Thyroid gland (tissue), 4 donors: ENCODE measurements at regions of chr7 and their contacts with region 1.

Region 1: GRCh38 chr7:8190119-8190895 is 71.7 kb downstream of the ICA1 start:
- DNase-seq: peak; percentile 65 to 70
- H3K4me3 ChIP-seq: no peak overlapping the region
- H3K27ac ChIP-seq: no peak overlapping the region
- H3K4me1 ChIP-seq: peaks cover 8 to 18% of the 10 kb centered on the region in 2 donors
- H3K27me3 ChIP-seq: no peaks in the 10 kb centered on the region
- CTCF ChIP-seq: peak in 5 of 6 experiments; percentile 47 to 79 (median 74)
- POLR2A ChIP-seq: no peak

Region 2: GRCh38 chr7:7653593-7654187 is 536.6 kb before region 1 on chr7:
- intact Hi-C with region 1: loop called (anchors 10 kb)
- DNase-seq: no peak
- H3K4me3 ChIP-seq: no peak overlapping the region
- H3K27ac ChIP-seq: no peak overlapping the region
- H3K4me1 ChIP-seq: no peaks in the 10 kb centered on the region
- H3K27me3 ChIP-seq: no peaks in the 10 kb centered on the region
- CTCF ChIP-seq: peak in 2 of 6 experiments; percentile 18 to 47
- POLR2A ChIP-seq: no peak